ENCODE measurements at regions of chr5 and their contacts with region 1.

Region 1: GRCh38 chr5:147332658-147333057 is 97.8 kb downstream of the STK32A start:
- DNase-seq: no peak
- H3K4me3 ChIP-seq: no peak overlapping the region
- H3K27ac ChIP-seq: no peak overlapping the region
- H3K4me1 ChIP-seq: peaks cover 0 to 8% (median 4%) of the 10 kb centered on the region in 4 experiments; a peak in 4 of 7 replicates
- H3K27me3 ChIP-seq: no peaks in the 10 kb centered on the region
- CTCF ChIP-seq: no peak
- EP300 ChIP-seq: no peak
- POLR2A ChIP-seq: no peak
- RAD21 ChIP-seq: no peak

Region 2: GRCh38 chr5:147346006-147346561 is 13.4 kb after region 1 on chr5:
- CTCF ChIA-PET with region 1: interaction called, 30 read pairs
- POLR2A ChIA-PET with region 1: no interaction called
- DNase-seq: no peak
- H3K4me3 ChIP-seq: no peak overlapping the region
- H3K27ac ChIP-seq: no peak overlapping the region
- H3K4me1 ChIP-seq: no peaks in the 10 kb centered on the region
- H3K27me3 ChIP-seq: no peaks in the 10 kb centered on the region
- CTCF ChIP-seq: peak in 2 of 3 experiments; percentile 24 to 43; a peak in 2 of 4 replicates
- EP300 ChIP-seq: no peak
- POLR2A ChIP-seq: no peak
- RAD21 ChIP-seq: peak; percentile 7 to 42; a peak in 3 of 4 replicates

Measured in H1 (cell line).